ENCODE measurements at regions of chr10 and their contacts with region 1.

Region 1: DNA sequence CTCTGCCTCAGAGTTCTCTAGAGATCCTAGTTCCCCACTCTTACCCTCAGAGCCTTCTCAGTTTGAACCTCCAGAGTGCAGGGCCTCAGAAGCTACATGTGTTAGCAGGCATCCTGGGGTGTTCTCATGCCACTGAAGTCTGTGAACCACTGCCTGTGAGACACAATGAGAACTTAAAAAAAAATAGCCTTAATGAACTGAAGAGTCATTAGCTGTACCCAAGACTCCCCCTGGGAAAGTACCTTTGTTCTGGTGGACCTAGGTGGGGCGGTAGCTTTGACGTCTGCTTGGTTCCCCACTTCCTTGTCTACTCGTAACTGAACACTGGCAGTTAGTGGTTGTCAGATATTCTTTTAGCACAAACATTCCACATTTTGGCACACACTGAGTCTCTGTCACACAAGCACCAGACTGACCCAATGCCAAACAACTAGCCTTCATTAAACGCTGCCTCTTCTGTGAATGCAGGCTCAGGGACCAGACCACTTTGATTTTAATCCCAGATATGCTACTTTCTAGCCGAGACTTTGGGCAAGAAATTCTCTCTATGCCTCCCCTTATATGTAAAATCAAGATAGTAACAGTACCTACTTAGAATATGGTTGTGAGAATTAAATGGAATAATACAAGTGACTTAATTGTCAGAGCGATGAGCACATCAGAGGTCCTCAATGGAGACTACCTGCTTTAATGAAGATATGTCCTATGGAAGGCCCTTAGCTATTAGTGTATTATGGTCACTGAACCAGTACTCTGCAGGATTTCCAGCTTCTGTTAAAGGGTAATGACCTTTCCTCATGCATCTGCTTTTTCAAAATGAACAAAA is 75.3 kb upstream of the CC2D2B start:
- DNase-seq: peak; percentile 77
- H3K4me3 Mint-ChIP-seq: peak overlapping the region; percentile 72
- H3K27ac Mint-ChIP-seq: peak overlapping the region; percentile 90
- H3K4me1 Mint-ChIP-seq: peaks cover 37% of the 10 kb centered on the region
- H3K27me3 Mint-ChIP-seq: no peaks in the 10 kb centered on the region

Region 2: DNA sequence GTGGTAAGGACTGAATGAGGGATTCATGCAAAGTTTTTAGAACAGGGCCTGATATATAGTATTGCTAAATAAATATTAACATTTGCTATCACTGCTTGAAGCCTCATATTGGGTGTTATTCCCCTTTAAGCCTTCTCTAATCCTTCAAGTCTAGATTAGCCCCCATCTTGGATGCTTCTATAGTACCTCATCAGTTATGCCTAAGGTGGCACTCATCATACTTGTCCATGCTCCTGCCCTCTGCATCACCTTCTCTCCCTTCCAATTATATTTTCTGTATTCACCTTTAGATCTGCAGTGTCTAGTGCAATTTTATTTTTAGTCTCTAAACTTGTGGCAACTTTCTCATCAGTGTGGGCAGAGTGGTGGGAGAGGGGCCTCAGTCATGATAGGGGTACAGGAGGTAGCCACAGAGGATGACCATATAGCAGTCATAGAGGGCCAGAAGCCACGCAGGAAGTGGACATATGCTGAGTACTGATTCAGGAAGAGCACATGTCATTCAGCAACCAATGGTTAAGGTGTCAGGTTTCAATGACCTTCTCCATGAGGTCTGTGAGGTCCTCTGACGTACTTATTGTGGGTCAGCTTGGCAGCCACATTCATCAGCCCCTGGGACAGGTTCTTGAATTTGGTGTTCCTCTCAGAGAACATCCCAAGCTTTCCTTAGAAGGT is 73.9 kb before region 1 on chr10:
- CTCF ChIA-PET with region 1: interaction called, 3 read pairs
- POLR2A ChIA-PET with region 1: no interaction called
- intact Hi-C with region 1: loop called (anchors 1 kb)
- DNase-seq: peak; percentile 20
- H3K4me3 Mint-ChIP-seq: no peak overlapping the region
- H3K27ac Mint-ChIP-seq: peak overlapping the region; percentile 18
- H3K4me1 Mint-ChIP-seq: peaks cover 18% of the 10 kb centered on the region
- H3K27me3 Mint-ChIP-seq: peaks cover 23% of the 10 kb centered on the region

Region 3: GRCh38 chr10:95790982-95791381 is 41.4 kb before region 1 on chr10:
- CTCF ChIA-PET with region 1: no interaction called
- POLR2A ChIA-PET with region 1: no interaction called
- intact Hi-C with region 1: loop called (anchors 1 kb)
- DNase-seq: no peak
- H3K4me3 Mint-ChIP-seq: no peak overlapping the region
- H3K27ac Mint-ChIP-seq: no peak overlapping the region
- H3K4me1 Mint-ChIP-seq: peaks cover 12% of the 10 kb centered on the region
- H3K27me3 Mint-ChIP-seq: peaks cover 5% of the 10 kb centered on the region

Region 4: DNA sequence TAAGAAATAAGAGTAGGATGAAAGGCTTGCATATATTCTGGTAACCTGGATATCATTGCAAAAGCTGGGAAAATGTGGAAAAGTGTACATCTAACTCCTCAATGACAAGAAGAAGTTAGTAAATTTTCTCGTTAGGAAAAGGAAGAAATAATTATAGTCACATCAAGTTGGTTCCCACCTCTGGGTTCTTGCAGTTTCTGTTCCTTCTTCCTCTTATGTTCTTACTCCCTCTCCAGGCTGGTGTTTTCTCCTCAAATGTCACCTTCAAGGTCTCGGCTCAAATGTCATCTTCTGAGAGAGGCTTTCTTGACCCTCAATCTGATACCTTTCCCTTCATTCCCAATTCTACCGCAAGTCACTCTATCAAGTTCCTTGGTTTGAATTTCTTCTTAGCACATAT is 12.1 kb before region 1 on chr10:
- CTCF ChIA-PET with region 1: no interaction called
- POLR2A ChIA-PET with region 1: no interaction called
- intact Hi-C with region 1: loop called (anchors 1 kb)
- DNase-seq: no peak
- H3K4me3 Mint-ChIP-seq: no peak overlapping the region
- H3K27ac Mint-ChIP-seq: no peak overlapping the region
- H3K4me1 Mint-ChIP-seq: peaks cover 12% of the 10 kb centered on the region
- H3K27me3 Mint-ChIP-seq: peaks cover 6% of the 10 kb centered on the region

Measured in activated CD4-positive, alpha-beta memory T cell treated with anti-CD3 and anti-CD28 coated beads for 36 hours (primary cell).